ENCODE measurements at regions of chr15 and their contacts with region 1.

Region 1: GRCh38 chr15:89075846-89076245 is 12.4 kb upstream of the ABHD2 start:
- DNase-seq: no peak
- H3K4me3 ChIP-seq: no peak overlapping the region
- H3K27ac ChIP-seq: no peak overlapping the region
- H3K4me1 ChIP-seq: no peaks in the 10 kb centered on the region
- H3K27me3 ChIP-seq: no peaks in the 10 kb centered on the region
- CTCF ChIP-seq: no peak
- EP300 ChIP-seq: no peak
- POLR2A ChIP-seq: no peak

Region 2: GRCh38 chr15:89041507-89041906 is 34.3 kb before region 1 on chr15:
- intact Hi-C with region 1: no loop called
- DNase-seq: no peak
- H3K4me3 ChIP-seq: no peak overlapping the region
- H3K27ac ChIP-seq: no peak overlapping the region
- H3K4me1 ChIP-seq: no peaks in the 10 kb centered on the region
- H3K27me3 ChIP-seq: no peaks in the 10 kb centered on the region
- CTCF ChIP-seq: no peak
- EP300 ChIP-seq: no peak
- POLR2A ChIP-seq: no peak

Region 3: DNA sequence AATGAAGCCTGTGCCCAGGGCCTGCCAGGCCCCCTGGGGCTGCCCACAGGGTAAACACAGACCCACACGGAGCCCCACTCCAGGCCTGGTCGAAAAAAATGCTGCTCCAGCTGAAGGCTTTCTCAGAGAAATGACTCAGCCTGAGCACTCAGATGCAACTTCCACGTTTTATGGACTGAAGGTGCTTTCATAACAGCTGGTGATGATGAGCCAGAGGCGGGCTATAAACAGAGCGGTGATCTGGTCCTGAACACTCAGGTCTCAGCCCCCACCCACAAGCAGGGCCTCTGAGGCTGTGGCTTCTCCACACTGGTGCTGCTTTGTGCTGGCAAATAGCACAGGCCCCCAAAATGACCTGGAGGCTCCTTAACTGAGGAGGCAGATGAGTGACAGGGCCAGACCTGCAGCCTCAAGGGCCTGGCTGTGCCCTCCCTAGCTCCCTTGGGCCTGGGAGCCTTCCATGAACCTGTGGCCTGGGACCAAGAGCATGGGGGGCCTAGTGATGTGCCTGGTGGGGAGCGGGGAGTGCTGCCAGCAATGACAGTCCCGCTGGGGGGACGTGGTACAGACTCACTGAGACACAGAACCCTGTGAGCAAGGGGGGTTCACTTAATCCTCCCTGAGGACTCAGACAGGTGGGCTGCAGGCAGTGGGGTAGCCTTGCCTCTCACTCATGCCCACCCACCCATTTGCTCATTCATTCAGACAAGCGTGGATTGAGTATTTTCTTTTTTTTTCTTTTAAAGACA is 1769.5 kb after region 1 on chr15:
- intact Hi-C with region 1: loop called in 1 of 4 experiments (anchors 5 kb)
- DNase-seq: no peak
- H3K4me3 ChIP-seq: no peak overlapping the region
- H3K27ac ChIP-seq: no peak overlapping the region
- H3K4me1 ChIP-seq: no peaks in the 10 kb centered on the region
- H3K27me3 ChIP-seq: no peaks in the 10 kb centered on the region
- CTCF ChIP-seq: no peak
- EP300 ChIP-seq: no peak
- POLR2A ChIP-seq: no peak

Measured in ovary (tissue), 10 donors.